CD4-positive, alpha-beta memory T cell (primary cell): ENCODE measurements at regions of chr1 and their contacts with region 1.

Region 1: GRCh38 chr1:109099938-109100773 is 9.6 kb downstream of the TMEM167B start:
- DNase-seq: peak; percentile 96 to 98 (median 97)
- H3K4me3 ChIP-seq: peak overlapping the region; percentile 80 to 81
- H3K4me3 Mint-ChIP-seq: peak overlapping the region; percentile 91 to 100 (median 96)
- H3K27ac ChIP-seq: peak overlapping the region; percentile 80
- H3K27ac Mint-ChIP-seq: peak overlapping the region; percentile 90 to 99 (median 98)
- H3K4me1 ChIP-seq: peaks cover 15% of the 10 kb centered on the region
- H3K4me1 Mint-ChIP-seq: peaks cover 7 to 20% (median 16%) of the 10 kb centered on the region in 4 donors
- H3K27me3 ChIP-seq: no peaks in the 10 kb centered on the region
- H3K27me3 Mint-ChIP-seq: no peaks in the 10 kb centered on the region

Region 2: DNA sequence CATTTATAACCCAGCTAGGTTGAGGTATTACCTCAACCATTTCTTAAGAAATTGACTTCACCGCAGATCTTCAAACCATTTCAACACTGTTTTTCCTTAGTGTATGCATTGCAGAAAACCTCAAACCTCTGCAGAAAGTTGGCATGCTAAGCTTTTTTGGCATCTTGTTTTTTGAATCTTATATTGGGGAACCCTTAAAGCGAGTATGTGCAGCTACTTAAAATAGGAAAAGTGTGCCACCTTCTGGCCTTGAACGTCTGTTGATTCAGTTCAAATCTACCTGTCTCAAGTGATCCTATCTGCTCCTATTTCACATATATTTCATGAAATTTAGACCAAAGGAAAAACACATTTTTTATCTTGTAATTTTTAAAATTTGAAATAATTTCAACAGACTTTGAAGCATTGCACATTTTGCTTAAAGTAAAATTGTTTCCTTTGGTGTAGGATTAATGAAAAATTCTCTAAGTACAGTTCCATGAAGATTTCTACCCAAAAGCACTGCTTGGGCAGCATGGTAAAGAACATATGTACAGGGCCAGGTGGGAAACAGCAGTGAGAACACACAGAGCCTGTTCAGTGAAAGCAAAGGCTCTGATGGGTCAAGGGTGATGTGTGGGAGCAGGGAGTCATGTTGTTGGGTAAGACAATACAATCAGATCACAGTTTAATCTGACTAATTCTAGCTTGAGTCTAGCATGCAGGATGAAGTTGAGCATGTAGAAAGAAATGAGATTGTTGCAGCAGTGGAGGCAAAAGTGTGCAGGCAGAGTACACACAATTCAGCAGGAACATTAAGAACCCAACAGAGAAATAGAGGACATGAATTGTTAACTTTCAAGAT is 456.4 kb before region 1 on chr1:
- CTCF ChIA-PET with region 1: no interaction called
- POLR2A ChIA-PET with region 1: interaction called, 12 read pairs
- intact Hi-C with region 1: no loop called
- DNase-seq: peak; percentile 57 to 73 (median 69)
- H3K4me3 ChIP-seq: no peak overlapping the region
- H3K4me3 Mint-ChIP-seq: peak overlapping the region in 7 of 8 donors; percentile 4 to 52 (median 17)
- H3K27ac ChIP-seq: peak overlapping the region; percentile 57
- H3K27ac Mint-ChIP-seq: peak overlapping the region; percentile 91 to 99 (median 98)
- H3K4me1 ChIP-seq: peaks cover 64% of the 10 kb centered on the region
- H3K4me1 Mint-ChIP-seq: peaks cover 59 to 76% (median 68%) of the 10 kb centered on the region in 4 donors
- H3K27me3 ChIP-seq: no peaks in the 10 kb centered on the region
- H3K27me3 Mint-ChIP-seq: no peaks in the 10 kb centered on the region

Region 3: DNA sequence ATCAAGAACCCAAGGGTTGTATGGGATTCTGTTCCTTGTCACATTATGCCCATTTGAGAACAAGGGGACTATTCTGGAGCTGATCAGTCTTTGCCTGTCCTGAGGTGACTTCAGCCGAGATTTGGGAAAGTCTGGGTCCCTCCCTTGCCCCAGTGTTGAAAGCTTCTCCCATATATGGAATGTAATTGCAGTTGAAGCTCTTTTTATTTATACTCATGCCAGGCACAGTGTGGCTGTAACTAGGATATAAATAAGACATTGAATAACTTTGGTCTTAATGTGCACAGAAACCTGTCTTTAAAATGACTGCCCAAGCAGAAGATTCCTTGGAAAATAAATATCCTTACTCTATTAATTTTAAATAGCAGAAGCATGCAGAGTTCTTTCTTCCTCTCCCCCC is 258.5 kb before region 1 on chr1:
- CTCF ChIA-PET with region 1: no interaction called
- POLR2A ChIA-PET with region 1: no interaction called
- intact Hi-C with region 1: no loop called
- DNase-seq: no peak
- H3K4me3 ChIP-seq: no peak overlapping the region
- H3K4me3 Mint-ChIP-seq: no peak overlapping the region
- H3K27ac ChIP-seq: no peak overlapping the region
- H3K27ac Mint-ChIP-seq: no peak overlapping the region
- H3K4me1 ChIP-seq: no peaks in the 10 kb centered on the region
- H3K4me1 Mint-ChIP-seq: no peaks in the 10 kb centered on the region
- H3K27me3 ChIP-seq: no peaks in the 10 kb centered on the region
- H3K27me3 Mint-ChIP-seq: peaks cover 0 to 2% of the 10 kb centered on the region in 2 donors

Region 4: GRCh38 chr1:108955881-108956280 is 144.3 kb before region 1 on chr1:
- CTCF ChIA-PET with region 1: interaction called, 5 read pairs
- POLR2A ChIA-PET with region 1: interaction called, 11 read pairs
- intact Hi-C with region 1: no loop called
- DNase-seq: no peak
- H3K4me3 ChIP-seq: no peak overlapping the region
- H3K4me3 Mint-ChIP-seq: peak overlapping the region in 3 of 8 donors; percentile 39 to 65 (median 62)
- H3K27ac ChIP-seq: no peak overlapping the region
- H3K27ac Mint-ChIP-seq: peak overlapping the region in 6 of 7 donors; percentile 70 to 98 (median 88)
- H3K4me1 ChIP-seq: peaks cover 32% of the 10 kb centered on the region
- H3K4me1 Mint-ChIP-seq: peaks cover 32 to 53% (median 42%) of the 10 kb centered on the region in 4 donors
- H3K27me3 ChIP-seq: no peaks in the 10 kb centered on the region
- H3K27me3 Mint-ChIP-seq: no peaks in the 10 kb centered on the region

Region 5: DNA sequence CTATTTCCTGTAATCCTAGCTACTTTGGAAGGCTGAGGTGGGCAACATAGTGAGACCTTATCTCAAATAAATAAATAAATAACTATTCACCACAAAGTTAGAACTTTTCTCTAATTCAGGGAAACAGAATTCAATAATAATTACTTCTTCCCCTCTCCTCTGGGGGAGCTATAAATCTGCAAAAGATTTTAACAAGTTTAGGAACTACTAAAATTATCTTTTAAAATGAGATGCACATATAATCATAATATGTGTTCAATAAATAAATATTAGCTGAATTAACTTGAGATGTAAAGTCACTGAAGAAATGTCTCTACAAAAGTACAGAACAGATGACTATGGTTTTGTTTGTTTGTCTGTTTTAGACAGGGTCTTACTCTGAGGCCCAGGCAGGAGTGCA is 72.3 kb before region 1 on chr1:
- CTCF ChIA-PET with region 1: interaction called, 13 read pairs
- POLR2A ChIA-PET with region 1: no interaction called
- intact Hi-C with region 1: no loop called
- DNase-seq: no peak
- H3K4me3 ChIP-seq: no peak overlapping the region
- H3K4me3 Mint-ChIP-seq: no peak overlapping the region
- H3K27ac ChIP-seq: no peak overlapping the region
- H3K27ac Mint-ChIP-seq: peak overlapping the region in 1 of 7 donors; percentile 7
- H3K4me1 ChIP-seq: no peaks in the 10 kb centered on the region
- H3K4me1 Mint-ChIP-seq: peaks cover 0 to 4% (median 2%) of the 10 kb centered on the region in 4 donors
- H3K27me3 ChIP-seq: no peaks in the 10 kb centered on the region
- H3K27me3 Mint-ChIP-seq: no peaks in the 10 kb centered on the region

Region 6: GRCh38 chr1:109075531-109076490 is 24.3 kb before region 1 on chr1 and contains the start of gene TAF13:
- CTCF ChIA-PET with region 1: interaction called, 21 read pairs
- POLR2A ChIA-PET with region 1: interaction called, 55 read pairs
- intact Hi-C with region 1: loop called (anchors 1 kb)
- DNase-seq: peak; percentile 82 to 88 (median 85)
- H3K4me3 ChIP-seq: peak within 1 kb of the TSS; percentile 95 to 99
- H3K4me3 Mint-ChIP-seq: peak within 1 kb of the TSS; percentile 95 to 100 (median 96)
- H3K27ac ChIP-seq: peak within 1 kb of the TSS; percentile 93
- H3K27ac Mint-ChIP-seq: peak within 1 kb of the TSS; percentile 99 to 100 (median 99)
- H3K4me1 ChIP-seq: peaks cover 17% of the 10 kb centered on the region
- H3K4me1 Mint-ChIP-seq: peaks cover 7 to 23% (median 17%) of the 10 kb centered on the region in 4 donors
- H3K27me3 ChIP-seq: no peaks in the 10 kb centered on the region
- H3K27me3 Mint-ChIP-seq: no peaks in the 10 kb centered on the region
- total RNA-seq, gene TAF13: 12.5 to 14.6 TPM

Region 7: GRCh38 chr1:109275706-109276345 is 175.7 kb after region 1 on chr1:
- CTCF ChIA-PET with region 1: no interaction called
- POLR2A ChIA-PET with region 1: no interaction called
- intact Hi-C with region 1: no loop called
- DNase-seq: no peak
- H3K4me3 ChIP-seq: no peak overlapping the region
- H3K4me3 Mint-ChIP-seq: no peak overlapping the region
- H3K27ac ChIP-seq: no peak overlapping the region
- H3K27ac Mint-ChIP-seq: no peak overlapping the region
- H3K4me1 ChIP-seq: peaks cover 4% of the 10 kb centered on the region
- H3K4me1 Mint-ChIP-seq: peaks cover 0 to 3% (median 0%) of the 10 kb centered on the region in 4 donors
- H3K27me3 ChIP-seq: no peaks in the 10 kb centered on the region
- H3K27me3 Mint-ChIP-seq: no peaks in the 10 kb centered on the region

Region 8: GRCh38 chr1:109483672-109484518 is 383.7 kb after region 1 on chr1 and contains the start of gene ATXN7L2:
- CTCF ChIA-PET with region 1: no interaction called
- POLR2A ChIA-PET with region 1: interaction called, 13 read pairs
- intact Hi-C with region 1: no loop called
- DNase-seq: peak; percentile 92 to 95 (median 93)
- H3K4me3 ChIP-seq: peak within 1 kb of the TSS; percentile 95 to 98
- H3K4me3 Mint-ChIP-seq: peak within 1 kb of the TSS; percentile 91 to 96 (median 94)
- H3K27ac ChIP-seq: peak within 1 kb of the TSS; percentile 76
- H3K27ac Mint-ChIP-seq: peak within 1 kb of the TSS; percentile 86 to 97 (median 92)
- H3K4me1 ChIP-seq: peaks cover 20% of the 10 kb centered on the region
- H3K4me1 Mint-ChIP-seq: peaks cover 17 to 42% (median 30%) of the 10 kb centered on the region in 4 donors
- H3K27me3 ChIP-seq: peaks cover 4% of the 10 kb centered on the region
- H3K27me3 Mint-ChIP-seq: peaks cover 0 to 5% of the 10 kb centered on the region in 2 donors
- total RNA-seq, gene ATXN7L2: 7.4 to 9.0 TPM